ENCODE measurements at regions of chrX and their contacts with region 1.

Region 1: DNA sequence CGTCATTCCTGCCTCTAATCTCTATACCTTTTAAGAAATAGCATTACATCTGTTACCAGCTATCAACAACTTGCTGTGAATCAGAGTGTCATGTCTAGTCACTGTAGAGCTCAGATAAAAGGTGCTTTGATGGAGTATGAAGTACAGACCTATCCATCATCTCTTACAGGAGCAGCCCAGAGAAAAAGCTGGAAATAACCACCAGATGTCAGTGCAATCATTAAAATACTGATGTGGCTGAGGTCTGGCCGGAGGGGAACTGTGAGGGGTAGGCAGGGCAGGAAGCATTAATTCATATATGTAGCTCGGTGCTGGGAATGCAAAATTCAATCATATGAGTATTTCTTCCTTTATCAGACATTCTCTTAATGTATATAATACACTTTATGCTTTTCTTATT is 100.6 kb downstream of the AKAP4 start:
- DNase-seq: no peak
- H3K4me3 ChIP-seq: no peak overlapping the region
- H3K27ac ChIP-seq: no peak overlapping the region
- H3K27me3 ChIP-seq: peaks cover 0 to 81% (median 20%) of the 10 kb centered on the region in 45 donors
- CTCF ChIP-seq: peak in 52 of 56 donors; percentile 21 to 67 (median 44)

Region 2: GRCh38 chrX:50579955-50580354 is 479.8 kb after region 1 on chrX:
- intact Hi-C with region 1: loop called in 1 of 2 experiments (anchors 5 kb)
- DNase-seq: peak in 3 of 10 donors; percentile 7 to 48 (median 42)
- H3K4me3 ChIP-seq: no peak overlapping the region
- H3K27ac ChIP-seq: no peak overlapping the region
- H3K27me3 ChIP-seq: peaks cover 0 to 61% (median 7%) of the 10 kb centered on the region in 45 donors
- CTCF ChIP-seq: peak in 55 of 56 donors; percentile 21 to 74 (median 56)

Region 3: GRCh38 chrX:50913520-50913919 is 813.3 kb after region 1 on chrX:
- intact Hi-C with region 1: loop called in 1 of 2 experiments (anchors 10 kb)
- DNase-seq: no peak
- H3K4me3 ChIP-seq: no peak overlapping the region
- H3K27ac ChIP-seq: no peak overlapping the region
- H3K27me3 ChIP-seq: peaks cover 0 to 85% (median 22%) of the 10 kb centered on the region in 45 donors
- CTCF ChIP-seq: no peak

Measured in dorsolateral prefrontal cortex (tissue), 120 donors.